ENCODE measurements at regions of chr11 and their contacts with region 1.

Region 1: GRCh38 chr11:99015634-99016454 is 4.9 kb upstream of the CNTN5 start:
- DNase-seq: peak; percentile 4
- H3K4me3 ChIP-seq: no peak overlapping the region
- H3K27ac ChIP-seq: no peak overlapping the region
- H3K27me3 ChIP-seq: no peaks in the 10 kb centered on the region
- CTCF ChIP-seq: peak; percentile 93

Region 2: DNA sequence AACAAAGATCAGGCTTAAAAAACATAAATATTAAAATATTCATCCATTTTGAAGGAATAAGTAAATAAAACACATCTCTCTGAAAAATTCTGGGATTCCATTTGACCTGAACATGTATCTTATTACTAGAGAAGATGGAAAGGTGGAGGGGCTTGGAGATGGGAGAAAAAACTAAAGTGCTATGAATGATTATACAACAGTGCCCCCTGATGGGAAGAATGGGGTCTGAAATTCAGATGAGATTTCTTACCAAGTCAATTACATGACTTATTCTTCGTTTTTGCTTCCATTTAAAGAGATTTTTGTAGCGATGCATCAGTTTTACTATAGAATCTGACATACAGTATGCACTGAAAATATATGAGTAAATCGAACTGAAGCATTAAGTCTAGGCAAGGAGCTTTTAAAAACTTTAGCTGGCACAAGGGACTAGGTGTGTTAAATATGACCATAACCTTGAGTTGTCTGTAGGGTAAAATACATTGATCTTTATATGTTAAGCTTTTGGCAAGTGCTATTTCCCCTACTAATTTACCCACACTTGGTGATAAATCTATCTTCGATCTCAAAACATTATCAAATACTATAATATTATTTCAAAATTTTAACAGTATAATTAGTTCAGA is 723.7 kb after region 1 on chr11:
- CTCF ChIA-PET with region 1: interaction called, 54 read pairs
- POLR2A ChIA-PET with region 1: no interaction called
- DNase-seq: peak; percentile 3
- H3K4me3 ChIP-seq: no peak overlapping the region
- H3K27ac ChIP-seq: no peak overlapping the region
- H3K27me3 ChIP-seq: no peaks in the 10 kb centered on the region
- CTCF ChIP-seq: peak; percentile 71

Measured in AG04450 (cell line).